ENCODE measurements at regions of chr5 and their contacts with region 1.

Region 1: DNA sequence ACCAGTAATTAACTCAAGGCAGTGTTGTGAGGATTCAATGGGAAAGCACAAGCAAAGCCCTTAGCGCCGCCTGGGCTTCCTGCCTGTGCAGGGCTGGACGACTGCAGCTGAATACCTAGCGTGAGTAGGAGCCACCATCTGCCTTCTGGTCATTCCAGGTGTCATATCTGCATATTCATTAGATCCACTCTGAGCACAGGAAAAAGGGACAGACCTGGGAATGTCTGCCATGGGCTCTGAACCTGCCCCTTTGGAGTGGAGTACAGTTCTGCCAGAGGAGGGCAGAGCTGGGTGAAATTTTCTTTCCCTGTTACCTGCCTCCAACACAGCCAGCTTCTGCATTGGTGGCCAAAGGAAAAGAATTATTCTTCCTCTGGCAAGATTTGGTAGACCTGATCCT is 298.8 kb downstream of the NSG2 start:
- DNase-seq: no peak
- ATAC-seq: peak; percentile 84
- H3K4me3 ChIP-seq: no peak overlapping the region
- H3K27ac ChIP-seq: no peak overlapping the region
- H3K4me1 ChIP-seq: no peaks in the 10 kb centered on the region
- H3K27me3 ChIP-seq: peaks cover 32% of the 10 kb centered on the region
- CTCF ChIP-seq: peak; percentile 8 to 30 (median 19); a peak in 3 of 6 replicates
- POLR2A ChIP-seq: no peak
- RAD21 ChIP-seq: peak; percentile 30

Region 2: DNA sequence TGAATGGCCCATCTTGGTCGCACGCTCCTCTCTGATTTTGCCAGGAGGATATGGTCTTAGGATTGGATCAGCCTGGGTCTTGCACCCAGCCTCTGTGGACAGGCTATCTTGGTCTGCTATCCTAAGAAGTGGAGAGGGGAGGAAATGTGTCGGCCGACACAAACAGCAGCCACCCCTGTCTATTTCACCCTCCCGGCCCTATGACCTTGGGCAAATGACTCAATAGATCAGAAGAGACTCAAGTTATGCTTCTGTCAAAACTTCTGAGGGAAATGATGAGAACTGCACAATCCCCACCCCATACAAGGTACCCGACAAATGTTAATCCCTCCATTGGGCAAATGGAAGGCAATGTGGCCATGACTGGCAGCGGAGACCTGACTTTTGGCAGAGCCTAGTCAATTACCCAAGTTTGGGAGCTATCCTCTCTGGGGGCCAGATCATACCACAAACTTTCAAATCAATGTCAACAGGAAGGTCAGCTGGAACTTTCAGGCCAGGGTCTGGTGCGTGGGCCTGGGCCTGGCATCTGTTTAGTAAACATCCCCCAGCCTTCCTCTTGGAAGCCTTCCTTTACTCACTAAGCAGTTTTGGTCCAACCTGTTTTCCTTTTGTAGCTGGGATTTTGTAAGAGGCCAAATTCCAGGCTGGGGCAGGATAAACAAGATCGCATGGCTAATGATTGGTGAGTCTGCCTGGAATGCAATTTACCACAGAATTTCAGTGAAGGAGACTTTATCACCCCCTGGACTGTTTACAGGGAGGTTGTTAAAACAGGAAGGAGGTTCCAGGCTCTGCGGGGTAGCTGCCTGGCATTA is 520.4 kb before region 1 on chr5:
- CTCF ChIA-PET with region 1: no interaction called
- POLR2A ChIA-PET with region 1: no interaction called
- RAD21 ChIA-PET with region 1: no interaction called
- intact Hi-C with region 1: no loop called
- DNase-seq: no peak
- ATAC-seq: no peak
- H3K4me3 ChIP-seq: no peak overlapping the region
- H3K27ac ChIP-seq: no peak overlapping the region
- H3K4me1 ChIP-seq: peaks cover 6 to 11% of the 10 kb centered on the region in 2 experiments; a peak in 2 of 4 replicates
- H3K27me3 ChIP-seq: no peaks in the 10 kb centered on the region
- CTCF ChIP-seq: no peak
- POLR2A ChIP-seq: no peak
- RAD21 ChIP-seq: no peak

Region 3: GRCh38 chr5:174177976-174178555 is 166.3 kb before region 1 on chr5:
- CTCF ChIA-PET with region 1: no interaction called
- POLR2A ChIA-PET with region 1: no interaction called
- RAD21 ChIA-PET with region 1: no interaction called
- intact Hi-C with region 1: no loop called
- DNase-seq: no peak
- ATAC-seq: no peak
- H3K4me3 ChIP-seq: no peak overlapping the region
- H3K27ac ChIP-seq: no peak overlapping the region
- H3K4me1 ChIP-seq: no peaks in the 10 kb centered on the region
- H3K27me3 ChIP-seq: peaks cover 20% of the 10 kb centered on the region; the same call in 1 of the 2 replicates
- CTCF ChIP-seq: no peak
- POLR2A ChIP-seq: no peak
- RAD21 ChIP-seq: no peak

Region 4: GRCh38 chr5:174735498-174736330 is 391.4 kb after region 1 on chr5:
- CTCF ChIA-PET with region 1: no interaction called
- POLR2A ChIA-PET with region 1: no interaction called
- RAD21 ChIA-PET with region 1: no interaction called
- intact Hi-C with region 1: loop called (anchors 1 kb)
- DNase-seq: peak; percentile 45
- ATAC-seq: peak; percentile 92
- H3K4me3 ChIP-seq: peak overlapping the region; percentile 47 to 59
- H3K27ac ChIP-seq: no peak overlapping the region
- H3K4me1 ChIP-seq: peaks cover 10 to 16% of the 10 kb centered on the region in 2 experiments
- H3K27me3 ChIP-seq: no peaks in the 10 kb centered on the region; the same call in 1 of the 2 replicates
- CTCF ChIP-seq: peak; percentile 75 to 87 (median 85)
- POLR2A ChIP-seq: no peak
- RAD21 ChIP-seq: peak; percentile 98